ENCODE measurements at regions of chr18 and their contacts with region 1.

Region 1: DNA sequence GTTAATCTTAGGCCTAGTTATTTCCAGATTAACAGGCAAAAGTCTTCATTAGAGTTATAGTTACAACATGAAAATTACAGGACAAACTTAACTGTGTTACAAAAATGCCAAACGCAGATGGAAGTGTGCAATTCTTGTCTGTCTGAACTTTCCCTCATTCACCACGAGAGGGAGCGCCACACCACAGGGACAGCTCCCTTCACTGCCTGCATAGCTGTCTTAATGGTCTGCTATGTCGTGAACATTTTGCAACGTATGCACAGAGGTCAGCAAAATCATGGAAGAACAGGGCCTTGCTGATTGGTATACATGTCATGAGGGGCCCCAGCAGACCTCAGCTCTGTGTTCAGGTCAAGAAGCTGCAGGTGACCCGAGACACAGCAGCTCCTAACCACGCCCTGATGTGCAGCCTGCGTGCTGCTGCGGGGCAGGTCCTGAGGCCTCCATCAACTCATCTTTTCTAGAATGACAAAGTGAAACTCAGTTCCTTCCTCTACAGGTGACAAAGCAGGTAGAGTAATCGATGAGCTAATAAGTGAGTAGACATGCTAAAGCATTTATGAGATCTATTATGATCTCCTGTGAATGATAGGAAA is 78.8 kb upstream of the ATP8B1 start:
- DNase-seq: peak; percentile 83
- H3K4me3 ChIP-seq: no peak overlapping the region
- H3K27ac ChIP-seq: no peak overlapping the region
- H3K4me1 ChIP-seq: no peaks in the 10 kb centered on the region
- H3K27me3 ChIP-seq: no peaks in the 10 kb centered on the region
- CTCF ChIP-seq: peak; percentile 75 to 88 (median 84)
- EP300 ChIP-seq: no peak
- POLR2A ChIP-seq: no peak

Region 2: DNA sequence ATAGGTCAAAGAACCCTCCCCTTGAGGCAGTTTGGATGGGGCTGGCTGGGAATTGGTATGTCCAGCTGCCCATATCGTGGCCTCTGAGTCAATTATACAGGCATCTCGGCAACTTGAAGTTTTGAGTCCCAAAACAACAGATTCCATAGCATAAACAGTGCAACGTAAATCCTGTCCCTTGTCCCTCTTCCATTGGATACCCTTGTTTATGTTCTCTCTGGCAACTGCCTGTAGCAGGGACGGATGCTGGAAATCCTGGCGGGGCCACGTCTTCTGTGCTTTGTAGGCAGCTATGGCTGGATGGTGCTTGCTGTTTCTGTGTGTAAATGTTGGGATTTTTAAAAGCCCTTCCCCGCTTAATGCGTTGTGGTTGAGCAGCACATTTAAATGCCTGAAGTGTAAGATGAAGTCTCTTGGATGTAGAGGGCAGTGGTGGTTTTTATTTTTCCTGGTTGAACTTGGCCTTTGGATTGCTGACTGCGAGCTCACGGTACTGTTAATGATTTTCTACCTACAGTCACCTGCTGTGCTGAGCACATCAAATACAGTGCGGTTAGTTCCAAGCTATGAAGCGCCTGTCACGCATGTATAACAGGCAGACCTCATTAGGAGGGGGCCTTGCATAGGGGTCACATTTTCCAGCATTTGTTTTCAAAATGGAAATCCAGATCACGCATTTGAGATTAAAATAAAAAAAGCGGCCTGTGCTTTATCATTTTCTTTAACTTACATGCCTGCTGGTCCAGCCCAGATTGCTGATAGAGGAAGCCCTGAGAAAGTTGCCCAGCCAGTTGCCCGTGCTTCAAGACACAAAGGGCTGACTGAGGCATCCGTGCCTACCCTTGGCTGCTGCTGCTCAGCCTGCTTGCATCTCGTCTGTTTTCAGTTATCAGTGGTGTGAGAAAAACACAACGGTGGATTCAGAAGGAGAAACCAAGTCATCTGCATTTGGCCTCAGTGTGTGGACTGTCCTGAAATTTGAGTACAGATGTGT is 246.8 kb after region 1 on chr18:
- intact Hi-C with region 1: loop called (anchors 5 kb)
- DNase-seq: no peak
- H3K4me3 ChIP-seq: no peak overlapping the region
- H3K27ac ChIP-seq: no peak overlapping the region
- H3K4me1 ChIP-seq: no peaks in the 10 kb centered on the region
- H3K27me3 ChIP-seq: no peaks in the 10 kb centered on the region
- CTCF ChIP-seq: no peak
- EP300 ChIP-seq: no peak
- POLR2A ChIP-seq: no peak

Region 3: GRCh38 chr18:58761241-58761969 is 879.5 kb after region 1 on chr18:
- intact Hi-C with region 1: loop called (anchors 5 kb)
- DNase-seq: no peak
- H3K4me3 ChIP-seq: no peak overlapping the region
- H3K27ac ChIP-seq: no peak overlapping the region
- H3K4me1 ChIP-seq: no peaks in the 10 kb centered on the region
- H3K27me3 ChIP-seq: peaks cover 0 to 20% (median 0%) of the 10 kb centered on the region in 3 donors
- CTCF ChIP-seq: no peak
- EP300 ChIP-seq: no peak
- POLR2A ChIP-seq: no peak

Measured in sigmoid colon (tissue), 7 donors.